Right ventricle myocardium superior (tissue), 1 donor: ENCODE measurements at regions of chr2 and their contacts with region 1.

Region 1: GRCh38 chr2:75403991-75404428 is 156.7 kb downstream of the EVA1A start:
- DNase-seq: no peak
- ATAC-seq: peak; percentile 64

Region 2: GRCh38 chr2:74690571-74690970 is 713.4 kb before region 1 on chr2:
- intact Hi-C with region 1: loop called (anchors 10 kb)
- DNase-seq: no peak
- ATAC-seq: peak; percentile 82

Region 3: GRCh38 chr2:75064691-75065396 is 339.2 kb before region 1 on chr2:
- intact Hi-C with region 1: loop called (anchors 10 kb)
- DNase-seq: peak; percentile 68
- ATAC-seq: peak; percentile 64